Dendritic cell treated with granulocyte-macrophage colony-stimulating factor and Interleukin-4, amounts not matched to agents 40 ng/mL and 50 ng/mL, for 4 days (primary cell): ENCODE measurements at regions of chr11 and their contacts with region 1.

Region 1: GRCh38 chr11:116787786-116788486 is at the start of gene ZPR1:
- H3K4me3 Mint-ChIP-seq: peak within 1 kb of the TSS; percentile 82
- H3K27ac Mint-ChIP-seq: peak within 1 kb of the TSS; percentile 98
- H3K4me1 Mint-ChIP-seq: peaks cover 45% of the 10 kb centered on the region
- H3K27me3 Mint-ChIP-seq: peaks cover 13% of the 10 kb centered on the region

Region 2: DNA sequence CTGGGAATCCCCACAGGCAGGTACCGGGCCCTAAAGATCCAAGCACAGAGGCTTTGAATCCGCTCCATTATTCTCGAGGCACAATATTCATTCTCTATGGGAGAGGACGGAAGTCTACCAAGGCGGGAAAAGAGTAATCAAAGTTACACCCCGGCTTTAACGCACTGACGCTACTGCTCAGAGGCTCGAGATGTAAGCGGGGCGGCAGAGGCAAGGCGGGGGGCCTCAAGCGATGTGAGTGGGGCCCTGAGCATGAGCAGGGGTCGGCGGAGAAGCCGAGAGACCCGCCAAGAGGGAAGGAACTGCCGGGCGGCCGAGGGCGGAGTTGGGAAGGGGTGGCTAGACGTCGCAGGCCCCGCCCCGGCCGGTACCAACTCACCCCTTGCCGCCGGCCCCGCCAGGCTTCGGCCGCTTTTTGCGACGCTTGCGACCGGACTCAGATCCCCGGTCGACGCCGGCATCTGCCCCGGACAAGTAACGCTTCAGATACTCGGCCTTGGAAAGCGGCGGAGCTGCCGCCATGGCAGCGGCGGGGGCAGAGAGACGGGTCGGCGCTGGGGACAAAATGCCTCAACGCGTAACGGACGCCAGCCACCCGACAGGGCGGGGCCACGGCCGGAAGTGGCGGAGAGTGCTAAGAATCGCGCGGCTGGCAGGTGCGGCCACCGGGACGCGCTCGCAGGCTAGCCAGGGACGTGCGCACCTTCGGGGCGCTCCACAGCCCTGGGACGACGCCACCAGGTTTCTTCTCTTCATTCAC is 15.3 kb before region 1 on chr11 and contains the start of gene BUD13:
- intact Hi-C with region 1: loop called (anchors 1 kb)
- H3K4me3 Mint-ChIP-seq: peak within 1 kb of the TSS; percentile 99
- H3K27ac Mint-ChIP-seq: peak within 1 kb of the TSS; percentile 97
- H3K4me1 Mint-ChIP-seq: peaks cover 54% of the 10 kb centered on the region
- H3K27me3 Mint-ChIP-seq: no peaks in the 10 kb centered on the region

Region 3: GRCh38 chr11:116835791-116836631 is 48.1 kb after region 1 on chr11:
- intact Hi-C with region 1: loop called (anchors 5 kb)
- H3K4me3 Mint-ChIP-seq: peak overlapping the region; percentile 68
- H3K27ac Mint-ChIP-seq: peak overlapping the region; percentile 75
- H3K4me1 Mint-ChIP-seq: peaks cover 24% of the 10 kb centered on the region
- H3K27me3 Mint-ChIP-seq: peaks cover 9% of the 10 kb centered on the region

Region 4: GRCh38 chr11:117107701-117108590 is 320.0 kb after region 1 on chr11:
- intact Hi-C with region 1: loop called (anchors 2 kb)
- H3K4me3 Mint-ChIP-seq: no peak overlapping the region
- H3K27ac Mint-ChIP-seq: no peak overlapping the region
- H3K4me1 Mint-ChIP-seq: peaks cover 4% of the 10 kb centered on the region
- H3K27me3 Mint-ChIP-seq: peaks cover 2% of the 10 kb centered on the region

Region 5: DNA sequence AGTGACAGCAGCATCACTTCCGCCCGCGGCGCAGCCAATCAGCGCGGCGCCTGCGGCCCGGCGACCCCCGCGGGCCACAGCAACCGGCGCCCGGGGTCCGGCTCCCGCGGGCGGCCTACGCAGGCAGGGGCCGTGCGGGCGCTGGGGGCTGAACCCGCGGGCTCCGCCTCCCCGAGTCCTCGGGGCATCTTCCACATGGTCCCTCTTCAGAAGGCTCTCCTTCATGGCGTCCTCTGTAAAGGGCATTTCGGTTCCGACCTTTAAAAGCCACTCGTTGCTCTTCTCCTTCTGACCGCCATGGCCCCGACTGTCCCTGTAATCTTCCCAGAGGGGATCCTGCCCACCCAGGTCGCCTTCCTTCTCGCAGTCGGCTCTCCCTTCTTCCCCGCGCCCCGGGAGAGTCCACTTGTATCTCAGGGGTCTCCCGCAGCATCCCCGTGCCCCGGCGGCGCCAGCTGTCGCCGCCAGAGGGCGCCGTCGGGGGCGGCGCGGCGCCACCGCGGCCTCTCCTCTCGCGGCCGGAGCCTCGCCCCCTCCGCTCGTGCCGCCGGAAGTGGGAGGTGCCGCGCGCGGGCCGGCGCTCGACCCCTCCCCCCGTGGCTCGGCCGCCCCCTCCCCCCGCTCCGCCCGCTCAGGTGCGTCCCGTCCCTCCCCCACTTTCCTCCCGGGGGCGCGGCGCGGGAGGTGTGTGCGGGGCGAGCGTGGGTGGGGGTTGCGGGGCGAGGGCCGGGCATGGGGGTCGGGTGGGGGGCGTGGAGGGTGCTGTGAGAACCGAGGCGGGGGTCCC is 444.3 kb after region 1 on chr11 and contains the start of gene RNF214:
- intact Hi-C with region 1: loop called (anchors 5 kb)
- H3K4me3 Mint-ChIP-seq: peak within 1 kb of the TSS; percentile 94
- H3K27ac Mint-ChIP-seq: peak within 1 kb of the TSS; percentile 96
- H3K4me1 Mint-ChIP-seq: peaks cover 40% of the 10 kb centered on the region
- H3K27me3 Mint-ChIP-seq: no peaks in the 10 kb centered on the region